ENCODE measurements at regions of chr5 and their contacts with region 1.

Region 1: DNA sequence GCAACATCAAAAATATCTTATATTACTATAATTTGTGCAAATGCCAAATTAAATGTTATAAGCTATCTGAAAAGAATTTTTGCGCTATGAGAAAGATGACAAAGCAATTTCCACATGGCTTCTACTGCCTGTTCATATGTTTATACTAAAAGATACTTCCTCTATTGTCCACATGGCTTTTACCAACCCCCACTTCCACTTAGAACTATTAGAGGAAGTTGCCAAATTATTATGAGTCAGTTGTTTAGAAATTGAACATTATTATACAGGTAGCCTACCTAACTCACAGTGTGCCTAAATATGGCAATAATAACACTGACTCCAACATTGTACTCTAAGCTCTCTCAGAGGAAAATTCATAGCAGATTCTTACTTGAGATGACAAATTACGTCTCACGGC is 37.6 kb upstream of the SLC27A6 start:
- DNase-seq: no peak
- H3K4me3 ChIP-seq: no peak overlapping the region
- H3K27ac ChIP-seq: no peak overlapping the region
- H3K4me1 ChIP-seq: no peaks in the 10 kb centered on the region
- H3K27me3 ChIP-seq: no peaks in the 10 kb centered on the region
- CTCF ChIP-seq: peak in 1 of 2 donors; percentile 1

Region 2: DNA sequence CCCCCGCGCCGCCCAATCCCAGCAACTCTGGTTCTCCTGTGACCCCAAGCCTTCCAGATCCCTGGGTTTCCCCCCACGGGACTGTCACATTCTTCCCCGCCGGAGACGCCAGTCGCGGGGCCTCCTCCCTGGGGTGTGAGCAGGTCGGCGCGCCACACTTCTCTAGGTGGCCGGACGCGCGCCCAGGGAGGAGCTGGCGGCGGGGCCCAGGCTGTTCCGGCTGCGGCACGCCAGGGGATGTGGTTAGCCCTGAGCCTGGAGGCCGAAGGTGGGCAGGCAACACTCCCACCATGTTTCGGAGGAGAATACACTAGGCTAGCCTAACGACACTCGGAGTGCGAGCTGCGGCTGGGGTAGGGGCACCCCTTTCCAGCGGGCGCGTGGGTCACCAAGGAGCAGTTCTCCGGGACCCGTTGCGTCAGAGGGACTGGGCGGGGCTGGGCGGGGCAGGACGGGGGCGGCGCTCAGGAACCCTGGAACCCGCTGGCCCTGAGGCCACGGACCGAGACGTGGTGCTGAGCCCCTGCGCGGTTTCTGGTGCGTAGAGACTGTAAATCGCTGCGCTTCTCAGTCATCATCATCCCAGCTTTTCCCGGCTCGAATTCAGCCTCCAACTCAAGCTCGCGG is 37.5 kb after region 1 on chr5 and contains the start of gene SLC27A6:
- CTCF ChIA-PET with region 1: no interaction called
- dilution Hi-C with region 1: loop called (anchors 5 kb)
- in situ Hi-C with region 1: no loop called
- intact Hi-C with region 1: no loop called
- DNase-seq: peak; percentile 14
- H3K4me3 ChIP-seq: peak within 1 kb of the TSS; percentile 44 to 68 (median 60)
- H3K27ac ChIP-seq: no peak within 1 kb of the TSS
- H3K4me1 ChIP-seq: peaks cover 20% of the 10 kb centered on the region
- H3K27me3 ChIP-seq: peaks cover 3% of the 10 kb centered on the region
- CTCF ChIP-seq: no peak
- total RNA-seq, gene SLC27A6: 7.5 to 26.5 TPM

Region 3: DNA sequence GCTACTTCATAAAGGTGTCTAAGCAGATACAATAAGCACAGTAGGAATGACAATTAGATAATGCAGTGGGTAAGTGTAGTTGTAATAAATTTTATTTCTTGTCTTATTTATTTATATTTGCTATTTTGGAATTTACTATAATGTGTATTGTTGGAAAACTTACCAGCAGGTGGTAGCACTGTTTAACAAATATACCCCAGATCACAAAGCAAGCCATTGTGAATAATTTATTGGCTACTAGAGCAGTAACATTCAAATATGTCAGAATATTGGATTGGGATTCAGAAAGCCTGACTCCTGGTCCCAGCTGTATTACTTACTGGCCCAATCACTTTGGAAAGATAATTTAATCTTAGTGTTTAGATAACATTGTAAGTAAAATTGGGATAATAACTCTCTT is 244.9 kb after region 1 on chr5:
- CTCF ChIA-PET with region 1: no interaction called
- dilution Hi-C with region 1: no loop called
- in situ Hi-C with region 1: no loop called
- intact Hi-C with region 1: no loop called
- DNase-seq: no peak
- H3K4me3 ChIP-seq: no peak overlapping the region
- H3K27ac ChIP-seq: no peak overlapping the region
- H3K4me1 ChIP-seq: no peaks in the 10 kb centered on the region
- H3K27me3 ChIP-seq: no peaks in the 10 kb centered on the region
- CTCF ChIP-seq: peak in 1 of 2 donors; percentile 21

Measured in mammary epithelial cell (primary cell).